ENCODE measurements at regions of chr14 and their contacts with region 1.

Region 1: DNA sequence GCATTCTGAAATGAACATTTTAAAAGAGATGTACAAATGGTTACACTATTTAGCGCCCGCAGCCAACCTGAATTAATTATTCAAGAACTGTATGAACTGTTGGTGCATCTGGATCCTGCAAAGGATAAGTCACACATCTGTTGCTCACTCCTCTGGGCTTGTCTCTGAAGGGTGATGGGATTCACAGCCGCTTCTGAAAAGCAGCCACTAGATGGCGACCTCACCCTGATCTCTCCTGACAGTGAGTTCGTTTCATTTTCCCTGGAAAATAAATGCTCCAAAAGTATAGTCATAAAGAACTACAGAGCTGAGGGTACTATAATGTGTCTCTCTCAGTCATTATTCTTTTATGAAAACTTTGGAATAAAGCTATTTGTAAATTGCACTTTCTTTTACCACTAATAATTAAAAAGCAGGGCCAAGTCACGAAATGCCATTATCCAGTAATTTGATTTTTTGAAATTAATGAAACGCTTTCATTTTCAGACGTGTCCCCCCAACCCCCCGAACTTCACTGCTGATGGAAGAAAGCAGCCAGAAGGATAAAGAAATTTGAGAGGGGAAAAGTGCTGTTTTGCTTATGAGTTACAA is 789.6 kb downstream of the NRXN3 start:
- DNase-seq: peak; percentile 80
- H3K4me3 ChIP-seq: peak overlapping the region in 3 of 4 donors; percentile 23 to 25 (median 24)
- H3K27ac ChIP-seq: peak overlapping the region in 2 of 4 donors; percentile 10 to 18
- H3K4me1 ChIP-seq: peaks cover 0 to 8% (median 0%) of the 10 kb centered on the region in 4 donors
- H3K27me3 ChIP-seq: no peaks in the 10 kb centered on the region
- CTCF ChIP-seq: peak; percentile 27 to 85 (median 65)
- EP300 ChIP-seq: no peak
- POLR2A ChIP-seq: no peak

Region 2: GRCh38 chr14:80850197-80850814 is 1890.5 kb after region 1 on chr14:
- intact Hi-C with region 1: loop called (anchors 10 kb)
- DNase-seq: no peak
- H3K4me3 ChIP-seq: no peak overlapping the region
- H3K27ac ChIP-seq: no peak overlapping the region
- H3K4me1 ChIP-seq: peaks cover 0 to 7% (median 0%) of the 10 kb centered on the region in 4 donors
- H3K27me3 ChIP-seq: no peaks in the 10 kb centered on the region
- CTCF ChIP-seq: peak in 2 of 4 experiments; percentile 43 to 47
- EP300 ChIP-seq: no peak
- POLR2A ChIP-seq: no peak

Measured in sigmoid colon (tissue), 7 donors.